ENCODE measurements at regions of chr1 and their contacts with region 1.

Region 1: GRCh38 chr1:20151906-20152598 is 12.9 kb downstream of the PLA2G2F start:
- DNase-seq: peak; percentile 84
- H3K4me3 ChIP-seq: peak overlapping the region; percentile 36
- H3K27ac ChIP-seq: no peak overlapping the region
- H3K4me1 ChIP-seq: no peaks in the 10 kb centered on the region
- H3K27me3 ChIP-seq: no peaks in the 10 kb centered on the region
- CTCF ChIP-seq: peak; percentile 95

Region 2: GRCh38 chr1:19918057-19918456 is 234.0 kb before region 1 on chr1:
- intact Hi-C with region 1: loop called (anchors 2 kb)
- DNase-seq: peak; percentile 89
- H3K4me3 ChIP-seq: no peak overlapping the region
- H3K27ac ChIP-seq: no peak overlapping the region
- H3K4me1 ChIP-seq: no peaks in the 10 kb centered on the region
- H3K27me3 ChIP-seq: no peaks in the 10 kb centered on the region
- CTCF ChIP-seq: peak; percentile 83

Region 3: DNA sequence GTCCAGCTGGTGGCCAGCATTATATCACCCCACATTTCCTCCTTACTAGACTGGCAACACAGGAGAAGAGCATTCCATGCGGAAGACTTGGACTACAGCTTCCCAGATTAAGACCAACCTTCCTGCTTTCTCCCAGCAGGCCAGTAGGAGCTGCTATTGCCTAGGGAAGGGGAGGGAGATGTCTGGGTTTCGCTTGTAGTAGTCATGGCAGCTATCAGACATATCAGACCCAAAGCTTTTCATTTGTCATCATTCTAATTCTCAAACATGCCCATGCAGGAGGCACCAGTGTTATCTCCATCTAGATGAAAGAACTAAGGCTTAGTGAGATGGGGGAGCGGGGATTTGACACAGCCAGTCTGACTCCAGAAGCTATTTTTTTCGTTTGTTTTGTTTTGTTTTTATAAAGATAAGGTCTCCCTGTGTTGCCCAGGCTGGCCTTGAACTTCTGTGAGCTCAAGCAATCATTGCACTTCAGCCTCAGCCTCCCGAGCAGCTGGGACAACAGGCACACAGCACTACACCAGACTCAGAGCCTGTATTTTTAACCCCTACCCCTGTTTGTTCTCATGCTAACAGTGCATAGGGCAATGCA is 177.1 kb before region 1 on chr1:
- intact Hi-C with region 1: loop called (anchors 5 kb)
- DNase-seq: peak; percentile 81
- H3K4me3 ChIP-seq: no peak overlapping the region
- H3K27ac ChIP-seq: no peak overlapping the region
- H3K4me1 ChIP-seq: peaks cover 3% of the 10 kb centered on the region
- H3K27me3 ChIP-seq: no peaks in the 10 kb centered on the region
- CTCF ChIP-seq: peak; percentile 76

Region 4: DNA sequence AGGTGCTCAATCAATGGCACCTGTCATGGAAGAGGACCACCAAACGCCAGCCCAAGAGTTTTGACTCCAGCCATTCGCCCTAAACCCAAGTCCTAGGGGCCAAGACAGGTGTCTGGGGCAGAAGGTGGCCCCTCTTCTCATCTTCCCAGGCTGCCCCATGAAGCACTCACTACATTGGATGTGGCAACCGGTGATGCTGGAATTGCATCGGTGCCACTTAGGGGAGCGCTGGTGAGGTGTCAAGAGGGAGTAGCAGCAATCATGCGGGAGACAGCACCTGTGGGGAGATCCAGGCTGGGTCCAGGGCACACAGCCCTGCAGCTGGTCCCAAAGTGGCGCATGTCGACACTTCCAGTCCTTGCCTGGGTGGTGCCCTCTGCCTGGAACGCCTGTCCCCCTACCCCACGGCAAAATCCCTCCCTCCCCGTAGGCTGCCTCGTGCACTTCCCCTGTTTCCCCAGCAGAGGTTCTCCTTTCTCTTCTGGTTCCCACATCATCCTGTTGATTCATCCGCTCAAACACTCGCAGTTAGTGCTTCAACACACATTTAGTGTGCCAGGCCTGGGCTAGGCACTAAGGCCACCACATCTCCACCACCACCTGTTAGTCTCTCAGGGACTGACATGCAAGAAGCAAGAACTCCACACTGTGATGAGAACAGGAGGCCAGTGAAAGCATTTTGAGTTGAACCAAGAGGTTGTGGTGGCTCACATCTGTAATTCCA is 51.3 kb before region 1 on chr1:
- intact Hi-C with region 1: loop called (anchors 5 kb)
- DNase-seq: peak; percentile 49
- H3K4me3 ChIP-seq: no peak overlapping the region
- H3K27ac ChIP-seq: no peak overlapping the region
- H3K4me1 ChIP-seq: no peaks in the 10 kb centered on the region
- H3K27me3 ChIP-seq: no peaks in the 10 kb centered on the region
- CTCF ChIP-seq: peak; percentile 83